Ovary (tissue), 10 donors: ENCODE measurements at regions of chr20 and their contacts with region 1.

Region 1: DNA sequence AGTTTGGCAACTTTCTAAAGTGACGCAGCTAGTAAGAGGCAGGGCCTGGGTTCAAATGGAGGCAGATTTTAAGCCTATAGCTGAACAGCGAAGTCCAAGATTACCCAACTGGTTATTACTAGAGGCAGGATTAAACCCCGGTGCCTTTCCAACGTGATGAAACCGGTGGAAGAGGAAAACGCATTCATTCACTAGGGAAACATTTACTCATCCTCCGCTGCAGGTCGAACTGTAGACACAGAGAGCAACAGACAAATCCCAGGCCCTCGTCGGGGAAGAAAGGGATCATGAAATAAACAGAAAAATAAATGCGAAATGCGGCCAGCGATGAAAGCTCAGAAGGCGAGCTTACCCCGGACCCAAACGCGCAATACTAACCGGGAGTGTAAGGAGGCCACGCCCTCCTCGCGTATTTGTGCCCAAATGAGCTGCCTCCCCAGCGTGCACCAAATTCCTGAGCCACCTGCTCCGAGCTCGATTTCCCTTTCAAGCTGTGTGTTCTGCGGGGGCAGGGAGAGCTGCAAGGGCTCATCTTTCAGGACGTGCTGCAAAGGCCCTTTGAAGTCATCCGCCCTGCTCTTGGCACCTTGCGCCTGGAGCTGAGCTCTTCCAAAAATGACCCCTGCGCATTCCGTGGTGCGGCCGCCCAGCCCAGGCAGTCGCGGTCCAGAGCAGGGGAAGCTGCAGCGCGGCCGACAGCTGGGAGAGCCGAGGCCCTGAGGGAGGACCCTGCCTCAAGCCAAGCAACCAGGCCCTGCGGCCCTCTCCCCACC is 46.9 kb downstream of the PDYN start:
- DNase-seq: peak; percentile 53 to 85 (median 60)
- H3K4me3 ChIP-seq: peak overlapping the region; percentile 14
- H3K27ac ChIP-seq: peak overlapping the region in 1 of 2 donors; percentile 15
- H3K4me1 ChIP-seq: peaks cover 7% of the 10 kb centered on the region
- H3K27me3 ChIP-seq: no peaks in the 10 kb centered on the region
- CTCF ChIP-seq: no peak
- EP300 ChIP-seq: no peak
- POLR2A ChIP-seq: peak; percentile 9

Region 2: GRCh38 chr20:1888796-1889463 is 58.0 kb before region 1 on chr20:
- intact Hi-C with region 1: loop called in 1 of 4 experiments (anchors 5 kb)
- DNase-seq: peak in 1 of 5 donors; percentile 39
- H3K4me3 ChIP-seq: no peak overlapping the region
- H3K27ac ChIP-seq: no peak overlapping the region
- H3K4me1 ChIP-seq: peaks cover 1% of the 10 kb centered on the region
- H3K27me3 ChIP-seq: no peaks in the 10 kb centered on the region
- CTCF ChIP-seq: no peak
- EP300 ChIP-seq: no peak
- POLR2A ChIP-seq: no peak